ENCODE measurements at regions of chr13 and their contacts with region 1.

Region 1: GRCh38 chr13:110108347-110109174 is 198.4 kb downstream of the COL4A1 start:
- DNase-seq: peak; percentile 78 to 86
- ATAC-seq: peak; percentile 75 to 87 (median 78)
- H3K4me3 ChIP-seq: no peak overlapping the region
- H3K27ac ChIP-seq: peak overlapping the region; percentile 83
- H3K4me1 ChIP-seq: peaks cover 13% of the 10 kb centered on the region
- H3K27me3 ChIP-seq: no peaks in the 10 kb centered on the region
- CTCF ChIP-seq: peak; percentile 61

Region 2: GRCh38 chr13:108961542-108962125 is 1146.9 kb before region 1 on chr13:
- intact Hi-C with region 1: loop called in 1 of 2 experiments (anchors 2 kb)
- DNase-seq: no peak
- ATAC-seq: peak; percentile 57 to 88 (median 76)
- H3K4me3 ChIP-seq: no peak overlapping the region
- H3K27ac ChIP-seq: no peak overlapping the region
- H3K4me1 ChIP-seq: no peaks in the 10 kb centered on the region
- H3K27me3 ChIP-seq: no peaks in the 10 kb centered on the region
- CTCF ChIP-seq: peak; percentile 88

Region 3: GRCh38 chr13:109145631-109146030 is 962.9 kb before region 1 on chr13:
- intact Hi-C with region 1: loop called in 1 of 2 experiments (anchors 10 kb)
- DNase-seq: no peak
- ATAC-seq: peak; percentile 60 to 85 (median 72)
- H3K4me3 ChIP-seq: no peak overlapping the region
- H3K27ac ChIP-seq: no peak overlapping the region
- H3K4me1 ChIP-seq: no peaks in the 10 kb centered on the region
- H3K27me3 ChIP-seq: peaks cover 0 to 22% (median 6%) of the 10 kb centered on the region in 3 donors
- CTCF ChIP-seq: peak; percentile 65

Region 4: GRCh38 chr13:109628251-109628699 is 480.3 kb before region 1 on chr13:
- intact Hi-C with region 1: loop called in 1 of 2 experiments (anchors 10 kb)
- DNase-seq: no peak
- ATAC-seq: peak; percentile 94 to 98 (median 96)
- H3K4me3 ChIP-seq: no peak overlapping the region
- H3K27ac ChIP-seq: peak overlapping the region; percentile 58
- H3K4me1 ChIP-seq: no peaks in the 10 kb centered on the region
- H3K27me3 ChIP-seq: peaks cover 0 to 3% (median 0%) of the 10 kb centered on the region in 3 donors
- CTCF ChIP-seq: no peak